ENCODE measurements at regions of chr17 and their contacts with region 1.

Region 1: DNA sequence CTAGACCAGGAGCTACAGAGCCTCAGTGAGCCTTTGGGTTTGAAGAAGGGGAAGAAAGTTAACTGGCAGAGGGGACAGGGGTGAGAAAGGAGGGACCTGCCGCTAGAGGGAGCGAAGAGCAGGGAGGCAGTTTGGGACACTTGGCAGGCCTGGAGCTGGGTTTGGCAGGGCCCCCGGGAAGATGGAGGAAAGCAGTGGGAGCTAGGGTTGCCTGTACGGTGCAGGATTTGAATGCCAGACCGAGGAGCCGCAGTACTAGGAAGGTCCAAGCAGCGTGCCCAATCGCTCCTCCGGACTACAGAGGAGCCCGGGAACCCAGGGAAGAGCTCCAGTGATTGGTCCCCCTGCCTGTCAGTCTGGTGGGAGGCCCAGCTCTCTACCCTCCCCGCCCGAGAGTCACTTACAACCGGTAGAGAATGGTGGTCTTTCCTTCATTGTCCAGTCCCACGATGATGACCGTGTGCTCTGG is 1.3 kb downstream of the ARL5C start:
- DNase-seq: peak; percentile 88
- ATAC-seq: peak; percentile 96
- H3K4me3 Mint-ChIP-seq: peak overlapping the region; percentile 83
- H3K27ac Mint-ChIP-seq: peak overlapping the region; percentile 60
- H3K4me1 Mint-ChIP-seq: peaks cover 40% of the 10 kb centered on the region
- H3K27me3 Mint-ChIP-seq: peaks cover 17% of the 10 kb centered on the region

Region 2: DNA sequence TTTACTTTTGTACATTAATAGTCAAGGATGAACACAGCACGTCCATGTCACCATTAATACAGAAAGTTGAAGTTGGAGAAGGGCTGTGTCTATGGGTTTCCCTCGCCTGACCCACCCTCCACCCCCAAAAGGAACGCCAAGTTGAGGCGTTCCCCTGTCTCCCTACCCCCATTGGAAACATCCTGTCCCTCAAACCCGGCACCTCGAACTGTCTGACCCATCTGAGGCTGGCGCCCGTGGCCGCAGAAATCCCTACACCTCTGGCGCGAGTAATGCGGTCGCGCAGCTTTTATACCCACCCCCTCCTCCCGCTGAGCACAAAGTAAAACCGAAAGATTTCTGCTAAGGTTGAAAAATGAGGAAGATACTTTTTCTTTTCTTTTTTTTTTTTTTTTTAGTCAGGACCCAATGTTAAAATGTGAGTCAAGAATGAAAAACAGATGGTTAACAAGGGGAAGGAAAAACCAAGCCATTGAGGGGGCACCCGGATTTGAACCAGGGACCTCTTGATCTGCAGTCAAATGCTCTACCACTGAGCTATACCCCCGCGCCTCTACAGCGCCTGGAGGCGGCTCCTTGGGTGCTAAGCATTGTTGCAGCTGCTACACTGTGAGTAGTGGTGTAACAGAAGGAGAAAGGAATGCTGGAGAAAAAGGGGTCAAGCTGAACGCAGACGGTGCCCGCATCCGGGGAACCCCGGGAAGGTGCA is 295.7 kb before region 1 on chr17:
- CTCF ChIA-PET with region 1: interaction called, 14 read pairs
- POLR2A ChIA-PET with region 1: no interaction called
- DNase-seq: peak; percentile 90
- ATAC-seq: peak; percentile 54
- H3K4me3 Mint-ChIP-seq: peak overlapping the region; percentile 99
- H3K27ac Mint-ChIP-seq: peak overlapping the region; percentile 85
- H3K4me1 Mint-ChIP-seq: peaks cover 42% of the 10 kb centered on the region
- H3K27me3 Mint-ChIP-seq: no peaks in the 10 kb centered on the region

Region 3: DNA sequence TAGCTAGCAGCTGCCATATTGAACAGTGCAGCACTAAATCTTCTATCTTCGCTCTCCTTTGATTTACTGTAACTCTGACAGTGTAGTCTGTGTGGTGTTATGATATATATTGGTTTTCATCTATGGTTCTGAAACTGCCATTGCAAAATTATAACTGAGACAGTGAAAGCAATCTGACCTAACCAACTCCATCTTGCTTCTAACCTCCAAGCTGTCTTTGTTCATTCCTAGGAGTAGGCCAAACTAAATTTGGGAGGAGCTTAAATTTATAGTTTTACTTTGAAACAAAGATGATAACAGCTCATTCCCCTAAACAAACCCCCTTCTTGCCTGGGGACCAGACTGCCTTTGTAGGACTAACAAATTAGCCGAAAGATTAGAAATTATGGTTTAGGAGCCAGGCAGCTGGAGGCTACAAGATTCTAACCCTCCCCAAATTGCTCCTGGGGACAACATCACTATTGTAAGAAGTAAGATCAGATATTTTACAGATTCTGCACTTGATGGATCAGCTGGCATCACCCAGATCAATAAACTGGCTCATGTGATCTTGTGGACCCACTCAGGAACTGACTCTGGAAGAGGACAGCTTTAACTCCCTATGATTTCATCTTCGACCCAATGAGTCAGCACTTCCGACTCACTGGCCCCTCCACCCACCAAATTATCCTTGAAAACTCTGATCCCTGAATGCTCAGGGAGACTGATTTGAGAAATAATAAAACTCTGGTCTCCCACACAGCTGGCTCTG is 150.5 kb before region 1 on chr17:
- CTCF ChIA-PET with region 1: interaction called, 11 read pairs
- POLR2A ChIA-PET with region 1: no interaction called
- DNase-seq: no peak
- ATAC-seq: no peak
- H3K4me3 Mint-ChIP-seq: no peak overlapping the region
- H3K27ac Mint-ChIP-seq: no peak overlapping the region
- H3K4me1 Mint-ChIP-seq: peaks cover 27% of the 10 kb centered on the region
- H3K27me3 Mint-ChIP-seq: no peaks in the 10 kb centered on the region

Region 4: GRCh38 chr17:39096508-39097149 is 68.1 kb before region 1 on chr17:
- CTCF ChIA-PET with region 1: interaction called, 14 read pairs
- POLR2A ChIA-PET with region 1: no interaction called
- DNase-seq: peak; percentile 81
- ATAC-seq: peak; percentile 55
- H3K4me3 Mint-ChIP-seq: peak overlapping the region; percentile 67
- H3K27ac Mint-ChIP-seq: peak overlapping the region; percentile 92
- H3K4me1 Mint-ChIP-seq: peaks cover 65% of the 10 kb centered on the region
- H3K27me3 Mint-ChIP-seq: peaks cover 3% of the 10 kb centered on the region

Region 5: DNA sequence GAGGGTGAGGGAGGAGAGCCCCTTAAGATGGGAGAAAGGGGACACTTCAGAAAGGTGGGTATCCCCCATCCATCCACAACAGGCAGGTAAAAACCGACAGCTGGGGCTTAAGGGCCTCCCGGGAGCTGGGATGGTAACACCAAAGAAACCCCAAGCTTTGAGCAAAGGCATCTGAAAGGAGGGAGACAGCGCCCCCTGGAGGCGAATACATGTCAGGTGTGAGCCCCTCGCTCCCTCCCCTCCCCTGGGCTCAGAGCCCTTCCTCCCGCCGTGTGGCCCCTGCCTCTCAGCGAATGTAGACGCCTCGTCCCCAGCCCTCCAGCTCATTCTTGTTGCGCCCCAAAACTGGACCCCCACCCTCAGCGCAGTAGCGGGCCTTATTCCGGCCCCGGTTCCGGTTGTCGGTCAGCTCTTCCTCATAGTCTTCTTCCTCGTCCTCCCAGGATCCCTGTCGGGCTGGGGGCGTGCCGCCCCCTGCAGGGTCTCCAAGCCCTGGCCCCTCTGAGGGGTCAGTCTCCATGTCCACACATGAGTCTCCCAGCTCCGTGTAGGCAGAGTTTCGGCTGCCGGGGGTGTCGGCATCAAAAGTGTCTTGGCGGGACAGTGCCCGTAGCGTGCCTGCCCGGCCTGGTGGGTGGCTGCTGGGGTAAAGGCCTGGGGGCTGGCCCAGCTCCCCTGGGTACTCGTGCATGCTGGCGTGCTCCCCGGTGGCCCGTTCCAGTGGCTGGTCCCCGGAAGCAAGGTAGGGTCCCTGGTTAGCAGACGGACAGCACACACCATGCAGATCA is 10.4 kb after region 1 on chr17:
- CTCF ChIA-PET with region 1: interaction called, 188 read pairs
- POLR2A ChIA-PET with region 1: interaction called, 6 read pairs
- DNase-seq: peak; percentile 87
- ATAC-seq: peak; percentile 87
- H3K4me3 Mint-ChIP-seq: no peak overlapping the region
- H3K27ac Mint-ChIP-seq: no peak overlapping the region
- H3K4me1 Mint-ChIP-seq: peaks cover 34% of the 10 kb centered on the region
- H3K27me3 Mint-ChIP-seq: no peaks in the 10 kb centered on the region

Region 6: GRCh38 chr17:39199820-39200069 is 35.0 kb after region 1 on chr17:
- CTCF ChIA-PET with region 1: interaction called, 31 read pairs
- POLR2A ChIA-PET with region 1: interaction called, 5 read pairs
- DNase-seq: peak; percentile 94
- ATAC-seq: peak; percentile 57
- H3K4me3 Mint-ChIP-seq: peak overlapping the region; percentile 99
- H3K27ac Mint-ChIP-seq: peak overlapping the region; percentile 97
- H3K4me1 Mint-ChIP-seq: peaks cover 63% of the 10 kb centered on the region
- H3K27me3 Mint-ChIP-seq: no peaks in the 10 kb centered on the region

Region 7: DNA sequence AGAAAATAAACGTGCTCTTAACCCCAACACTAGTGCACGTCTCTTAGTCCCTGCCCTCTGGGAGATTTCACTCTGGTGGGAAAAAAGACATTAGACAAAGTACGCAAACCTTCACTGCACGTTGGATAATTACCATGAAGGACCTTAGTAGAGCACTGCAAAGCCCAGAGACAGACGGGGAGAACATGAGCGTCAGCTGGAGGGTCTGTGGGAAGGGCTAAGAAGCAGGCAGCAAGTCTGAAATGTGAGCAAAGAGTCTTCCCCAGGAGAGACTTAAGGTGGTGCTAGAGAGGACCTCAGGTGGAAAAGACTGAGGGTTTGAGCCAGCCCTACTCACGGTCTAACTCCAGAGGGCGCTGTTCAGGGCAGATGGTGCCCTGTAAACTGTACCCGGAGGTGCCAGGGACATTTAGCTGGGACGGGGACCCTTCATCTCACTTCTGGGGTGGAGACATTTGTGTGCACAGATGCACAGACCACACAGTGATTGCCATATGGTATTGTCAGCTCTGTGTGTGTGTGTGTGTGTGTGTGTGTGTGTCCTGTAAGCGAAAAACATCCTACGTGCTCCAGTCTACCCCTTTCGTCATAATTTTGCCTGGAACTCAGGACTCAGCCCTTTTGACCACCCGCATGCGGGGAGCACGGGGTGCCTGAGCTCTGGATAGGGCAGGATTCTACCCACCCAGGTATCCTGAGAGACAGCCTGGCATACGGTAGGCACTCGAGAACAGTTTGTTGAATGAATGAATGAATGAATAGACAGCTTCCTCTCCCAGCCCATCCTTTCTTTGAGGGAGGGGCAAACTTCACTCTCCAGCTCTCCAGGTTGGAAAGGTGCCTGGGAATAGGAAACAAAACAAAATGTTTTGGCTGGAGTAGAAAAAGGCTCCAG is 71.1 kb after region 1 on chr17:
- CTCF ChIA-PET with region 1: interaction called, 17 read pairs
- POLR2A ChIA-PET with region 1: no interaction called
- DNase-seq: peak; percentile 76
- ATAC-seq: peak; percentile 70
- H3K4me3 Mint-ChIP-seq: no peak overlapping the region
- H3K27ac Mint-ChIP-seq: no peak overlapping the region
- H3K4me1 Mint-ChIP-seq: peaks cover 33% of the 10 kb centered on the region
- H3K27me3 Mint-ChIP-seq: peaks cover 3% of the 10 kb centered on the region

Region 8: GRCh38 chr17:39270923-39271322 is 106.2 kb after region 1 on chr17:
- CTCF ChIA-PET with region 1: no interaction called
- POLR2A ChIA-PET with region 1: no interaction called
- DNase-seq: no peak
- ATAC-seq: no peak
- H3K4me3 Mint-ChIP-seq: no peak overlapping the region
- H3K27ac Mint-ChIP-seq: no peak overlapping the region
- H3K4me1 Mint-ChIP-seq: no peaks in the 10 kb centered on the region
- H3K27me3 Mint-ChIP-seq: no peaks in the 10 kb centered on the region